SK-N-SH (cell line): ENCODE measurements at regions of chr1 and their contacts with region 1.

Region 1: GRCh38 chr1:6438047-6438525 is 13.5 kb downstream of the ESPN start:
- DNase-seq: peak; percentile 88
- H3K4me3 ChIP-seq: no peak overlapping the region; a peak in 1 of 4 replicates
- H3K27ac ChIP-seq: no peak overlapping the region
- H3K4me1 ChIP-seq: no peaks in the 10 kb centered on the region; a peak in 1 of 4 replicates
- H3K27me3 ChIP-seq: no peaks in the 10 kb centered on the region
- CTCF ChIP-seq: peak; percentile 83
- EP300 ChIP-seq: no peak
- RAD21 ChIP-seq: peak; percentile 70

Region 2: DNA sequence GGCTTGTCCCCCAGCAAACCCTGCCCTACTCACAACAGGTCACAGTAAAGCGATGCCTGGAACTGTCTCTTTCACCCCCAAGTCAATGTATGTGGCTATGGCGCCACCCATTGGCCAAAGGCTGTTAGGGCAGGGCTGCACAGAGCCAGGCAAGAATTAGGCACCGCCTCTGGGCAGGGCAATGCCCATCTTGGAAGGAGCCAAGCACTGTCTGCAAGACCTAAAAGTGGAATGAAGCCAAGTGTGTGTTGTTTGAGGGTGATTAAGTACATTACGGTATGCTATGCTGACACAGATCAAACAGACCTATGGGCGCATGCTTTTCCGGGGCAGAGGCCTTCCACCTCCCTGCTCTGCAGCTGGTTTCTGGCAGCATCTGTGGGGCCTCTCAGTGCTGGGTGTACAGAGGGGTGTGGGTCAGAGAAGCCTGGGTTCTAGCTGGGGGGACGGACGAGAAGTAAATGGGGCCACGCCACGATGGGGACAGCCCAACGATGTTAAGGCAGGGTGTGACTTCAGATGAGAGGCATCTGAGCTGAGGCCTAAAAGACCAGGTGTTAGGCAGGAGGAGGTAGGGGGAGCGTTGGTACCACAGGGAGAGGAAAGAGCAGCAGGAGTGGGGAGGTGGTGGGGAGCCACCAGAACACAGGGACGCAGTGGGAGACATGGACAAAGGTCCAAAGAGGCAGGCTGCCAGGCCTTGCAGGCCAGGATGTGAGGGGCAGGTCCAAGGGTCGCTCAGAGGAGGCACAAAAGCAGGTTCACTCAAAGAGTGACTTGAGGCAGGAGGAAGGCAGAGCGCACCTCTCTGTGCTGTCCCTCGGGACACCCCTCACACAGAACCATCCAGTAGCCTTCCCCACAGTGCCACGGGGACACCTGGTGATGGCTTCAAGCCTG is 94.3 kb before region 1 on chr1:
- CTCF ChIA-PET with region 1: interaction called, 16 read pairs
- POLR2A ChIA-PET with region 1: no interaction called
- DNase-seq: peak; percentile 83
- H3K4me3 ChIP-seq: peak overlapping the region in 1 of 2 experiments; percentile 55; a peak in 1 of 4 replicates
- H3K27ac ChIP-seq: no peak overlapping the region
- H3K4me1 ChIP-seq: no peaks in the 10 kb centered on the region; a peak in 1 of 4 replicates
- H3K27me3 ChIP-seq: no peaks in the 10 kb centered on the region
- CTCF ChIP-seq: peak; percentile 88
- EP300 ChIP-seq: no peak
- RAD21 ChIP-seq: peak; percentile 93

Region 3: DNA sequence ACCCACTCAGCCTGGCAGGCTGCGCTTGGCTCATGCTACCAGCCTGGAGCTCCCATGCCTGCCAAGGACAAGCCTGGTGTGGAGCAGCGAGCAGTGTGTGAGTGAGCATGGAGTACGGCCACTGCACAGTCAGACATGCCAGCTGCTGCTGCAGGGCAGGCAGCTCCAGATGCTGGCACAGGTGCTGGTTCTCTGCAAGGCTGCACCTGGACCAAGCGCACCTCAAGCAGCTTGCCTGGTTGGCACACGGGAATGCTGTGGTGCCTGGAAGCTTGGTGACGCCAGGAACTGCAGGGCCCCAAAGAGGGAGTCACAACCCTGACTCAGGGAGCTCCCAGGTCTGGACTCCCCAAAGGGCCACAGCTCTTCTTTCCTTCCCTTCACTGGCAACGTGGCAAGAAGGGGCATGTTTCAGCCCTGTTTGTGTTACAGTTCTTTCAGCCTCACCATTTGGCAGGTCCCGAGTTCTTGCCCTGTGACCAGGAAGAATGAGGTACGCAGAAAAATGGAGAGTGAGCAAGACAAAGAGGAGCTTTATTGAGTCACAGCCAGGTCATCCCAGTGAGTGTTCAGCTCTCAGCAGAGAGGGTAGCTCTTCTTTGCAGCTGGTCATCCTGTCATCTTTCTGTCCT is 70.6 kb before region 1 on chr1:
- CTCF ChIA-PET with region 1: interaction called, 108 read pairs
- POLR2A ChIA-PET with region 1: no interaction called
- DNase-seq: no peak
- H3K4me3 ChIP-seq: no peak overlapping the region
- H3K27ac ChIP-seq: no peak overlapping the region
- H3K4me1 ChIP-seq: peaks cover 0 to 7% of the 10 kb centered on the region in 2 experiments; a peak in 1 of 4 replicates
- H3K27me3 ChIP-seq: no peaks in the 10 kb centered on the region
- CTCF ChIP-seq: no peak
- EP300 ChIP-seq: no peak
- RAD21 ChIP-seq: no peak

Region 4: DNA sequence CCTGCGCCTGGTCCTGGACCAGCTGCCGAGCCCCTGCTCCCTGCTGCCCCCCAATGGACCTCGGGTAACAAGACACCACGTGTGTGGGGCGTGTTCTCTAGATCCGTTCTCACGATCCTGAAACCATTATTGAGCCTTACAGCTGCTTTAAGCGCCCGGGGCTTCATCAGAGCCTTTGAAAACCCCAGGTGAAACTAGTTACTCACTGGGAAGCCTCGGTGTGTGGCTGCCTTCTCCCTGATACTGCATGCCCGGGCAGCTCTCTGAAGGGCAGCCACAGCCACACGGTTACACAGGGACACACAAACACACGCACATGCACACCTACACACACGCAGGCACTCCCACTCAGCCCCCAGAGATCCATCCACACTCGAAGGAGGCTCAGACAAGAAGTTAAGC is 23.6 kb before region 1 on chr1:
- CTCF ChIA-PET with region 1: interaction called, 290 read pairs
- POLR2A ChIA-PET with region 1: no interaction called
- DNase-seq: peak; percentile 87
- H3K4me3 ChIP-seq: no peak overlapping the region
- H3K27ac ChIP-seq: no peak overlapping the region
- H3K4me1 ChIP-seq: peaks cover 0 to 6% of the 10 kb centered on the region in 2 experiments; a peak in 1 of 4 replicates
- H3K27me3 ChIP-seq: peaks cover 17% of the 10 kb centered on the region
- CTCF ChIP-seq: peak; percentile 59
- EP300 ChIP-seq: no peak
- RAD21 ChIP-seq: peak; percentile 50

Region 5: GRCh38 chr1:6454856-6455751 is 17.0 kb after region 1 on chr1:
- CTCF ChIA-PET with region 1: interaction called, 70 read pairs
- POLR2A ChIA-PET with region 1: interaction called, 3 read pairs
- DNase-seq: peak; percentile 74
- H3K4me3 ChIP-seq: no peak overlapping the region
- H3K27ac ChIP-seq: no peak overlapping the region
- H3K4me1 ChIP-seq: no peaks in the 10 kb centered on the region; a peak in 1 of 4 replicates
- H3K27me3 ChIP-seq: peaks cover 17% of the 10 kb centered on the region
- CTCF ChIP-seq: no peak
- EP300 ChIP-seq: no peak
- RAD21 ChIP-seq: no peak

Region 6: DNA sequence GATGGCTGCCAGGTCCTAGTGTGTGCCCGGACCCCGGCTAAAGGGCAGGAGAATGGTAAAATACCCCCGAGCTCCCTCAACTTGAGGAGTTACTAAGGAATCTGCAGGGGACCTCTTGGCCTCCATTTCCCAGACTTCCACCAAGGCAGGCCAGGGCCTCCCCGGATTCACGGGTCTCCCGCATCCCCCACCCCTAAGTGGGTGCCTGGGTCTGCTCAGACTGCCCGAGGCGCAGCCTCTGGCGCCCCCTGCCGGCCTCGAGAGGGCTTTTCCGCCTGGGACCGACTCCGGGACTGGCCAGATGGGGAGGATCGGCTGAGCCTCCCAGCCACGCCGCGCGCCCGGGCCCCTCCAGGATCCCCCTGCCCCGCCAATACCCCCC is 51.7 kb after region 1 on chr1:
- CTCF ChIA-PET with region 1: interaction called, 10 read pairs
- POLR2A ChIA-PET with region 1: no interaction called
- DNase-seq: peak; percentile 95
- H3K4me3 ChIP-seq: peak overlapping the region; percentile 75 to 76
- H3K27ac ChIP-seq: peak overlapping the region; percentile 74 to 79; a peak in 2 of 4 replicates
- H3K4me1 ChIP-seq: peaks cover 0 to 53% of the 10 kb centered on the region in 2 experiments; a peak in 1 of 4 replicates
- H3K27me3 ChIP-seq: no peaks in the 10 kb centered on the region
- CTCF ChIP-seq: peak; percentile 78
- EP300 ChIP-seq: no peak
- RAD21 ChIP-seq: peak; percentile 60

Region 7: GRCh38 chr1:6592441-6592840 is 154.4 kb after region 1 on chr1:
- CTCF ChIA-PET with region 1: no interaction called
- POLR2A ChIA-PET with region 1: no interaction called
- DNase-seq: no peak
- H3K4me3 ChIP-seq: no peak overlapping the region
- H3K27ac ChIP-seq: no peak overlapping the region
- H3K4me1 ChIP-seq: no peaks in the 10 kb centered on the region; a peak in 1 of 4 replicates
- H3K27me3 ChIP-seq: no peaks in the 10 kb centered on the region
- CTCF ChIP-seq: no peak
- EP300 ChIP-seq: no peak
- RAD21 ChIP-seq: no peak